ENCODE measurements at regions of chr3 and their contacts with region 1.

Region 1: DNA sequence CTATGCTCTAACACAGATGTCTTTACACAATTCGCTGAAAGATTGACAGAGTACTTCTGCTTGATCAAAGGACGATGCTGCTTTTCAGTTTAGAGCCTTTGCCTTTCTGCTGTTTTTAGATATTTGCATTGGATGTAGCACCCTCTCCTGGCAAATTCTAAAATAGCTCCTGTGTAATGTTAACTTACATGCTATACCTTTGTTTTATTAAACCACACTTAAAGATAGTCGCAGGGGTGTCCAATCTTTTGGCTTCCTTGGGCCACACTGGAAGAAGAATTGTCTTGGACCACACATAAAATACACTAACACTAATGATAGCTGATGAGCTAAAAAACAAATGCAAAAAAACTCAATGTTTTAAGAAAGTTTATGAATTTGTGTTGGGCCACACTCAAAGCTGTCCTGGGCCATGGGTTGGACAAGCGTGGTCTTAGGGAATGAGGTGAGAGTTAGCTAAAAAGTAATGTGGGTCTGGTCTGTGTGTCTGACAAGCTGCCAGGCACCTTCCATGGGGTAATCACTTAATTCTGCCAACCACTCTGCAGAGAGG is 62.9 kb downstream of the ATG7 start:
- DNase-seq: no peak
- ATAC-seq: peak; percentile 40 to 80 (median 68)
- H3K4me3 ChIP-seq: no peak overlapping the region
- H3K27ac ChIP-seq: no peak overlapping the region
- H3K4me1 ChIP-seq: no peaks in the 10 kb centered on the region
- H3K27me3 ChIP-seq: no peaks in the 10 kb centered on the region
- CTCF ChIP-seq: peak; percentile 60

Region 2: GRCh38 chr3:10758304-10759061 is 576.6 kb before region 1 on chr3:
- intact Hi-C with region 1: loop called in 1 of 2 experiments (anchors 10 kb)
- DNase-seq: peak; percentile 31 to 63
- ATAC-seq: peak; percentile 77 to 89 (median 84)
- H3K4me3 ChIP-seq: no peak overlapping the region
- H3K27ac ChIP-seq: no peak overlapping the region
- H3K4me1 ChIP-seq: no peaks in the 10 kb centered on the region
- H3K27me3 ChIP-seq: peaks cover 0 to 24% (median 7%) of the 10 kb centered on the region in 3 donors
- CTCF ChIP-seq: peak; percentile 61

Region 3: GRCh38 chr3:10945683-10946287 is 389.3 kb before region 1 on chr3:
- intact Hi-C with region 1: loop called in 1 of 2 experiments (anchors 10 kb)
- DNase-seq: peak; percentile 68 to 80
- ATAC-seq: peak; percentile 61 to 89 (median 88)
- H3K4me3 ChIP-seq: no peak overlapping the region
- H3K27ac ChIP-seq: no peak overlapping the region
- H3K4me1 ChIP-seq: no peaks in the 10 kb centered on the region
- H3K27me3 ChIP-seq: peaks cover 0 to 4% (median 0%) of the 10 kb centered on the region in 3 donors
- CTCF ChIP-seq: peak; percentile 81

Region 4: DNA sequence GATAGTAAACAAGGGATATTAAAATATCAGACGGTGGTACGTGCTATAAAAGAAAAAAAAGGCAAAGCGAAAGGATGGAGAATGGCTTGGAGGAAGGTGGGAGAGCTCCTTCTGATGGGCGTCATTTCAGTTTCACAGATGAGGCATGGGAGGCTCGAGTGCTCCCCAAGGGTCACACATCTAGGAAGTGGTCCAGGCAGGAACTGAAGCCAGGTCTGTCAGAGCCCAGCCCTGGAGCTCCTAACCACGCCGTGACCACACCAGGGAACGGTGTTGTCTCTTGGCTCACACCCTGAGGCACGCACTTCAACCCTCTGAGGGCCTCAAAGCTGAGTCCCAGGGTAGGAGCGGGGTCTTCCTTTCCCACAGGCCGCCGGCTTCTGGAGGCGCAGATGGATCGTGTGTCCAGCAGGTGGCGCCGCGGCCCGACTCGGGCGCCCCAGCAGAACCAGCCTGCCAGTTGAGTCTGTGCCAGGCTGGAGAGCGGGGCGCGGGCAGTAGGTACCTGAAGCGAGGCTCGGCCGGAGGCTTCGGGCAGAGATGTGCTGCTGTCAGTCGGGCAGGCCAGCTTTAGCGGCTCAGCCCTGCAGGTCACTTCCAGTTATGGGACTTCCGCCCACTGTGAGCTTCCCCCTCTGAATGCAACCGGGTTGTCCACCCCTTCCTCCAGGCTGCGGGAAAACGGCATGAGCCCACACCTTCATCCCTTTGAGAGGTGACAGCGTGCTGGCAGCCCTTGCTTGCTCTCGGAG is 274.5 kb before region 1 on chr3:
- intact Hi-C with region 1: loop called (anchors 5 kb)
- DNase-seq: peak; percentile 73 to 74
- ATAC-seq: peak; percentile 42 to 82 (median 74)
- H3K4me3 ChIP-seq: peak overlapping the region; percentile 5
- H3K27ac ChIP-seq: no peak overlapping the region
- H3K4me1 ChIP-seq: no peaks in the 10 kb centered on the region
- H3K27me3 ChIP-seq: peaks cover 0 to 40% (median 2%) of the 10 kb centered on the region in 3 donors
- CTCF ChIP-seq: peak; percentile 75

Region 5: GRCh38 chr3:11155341-11156025 is 179.6 kb before region 1 on chr3:
- intact Hi-C with region 1: loop called in 1 of 2 experiments (anchors 2 kb)
- DNase-seq: peak; percentile 73 to 79
- ATAC-seq: peak; percentile 82 to 91 (median 90)
- H3K4me3 ChIP-seq: peak overlapping the region; percentile 67
- H3K27ac ChIP-seq: no peak overlapping the region
- H3K4me1 ChIP-seq: no peaks in the 10 kb centered on the region
- H3K27me3 ChIP-seq: peaks cover 0 to 56% (median 8%) of the 10 kb centered on the region in 3 donors
- CTCF ChIP-seq: peak; percentile 58

Region 6: DNA sequence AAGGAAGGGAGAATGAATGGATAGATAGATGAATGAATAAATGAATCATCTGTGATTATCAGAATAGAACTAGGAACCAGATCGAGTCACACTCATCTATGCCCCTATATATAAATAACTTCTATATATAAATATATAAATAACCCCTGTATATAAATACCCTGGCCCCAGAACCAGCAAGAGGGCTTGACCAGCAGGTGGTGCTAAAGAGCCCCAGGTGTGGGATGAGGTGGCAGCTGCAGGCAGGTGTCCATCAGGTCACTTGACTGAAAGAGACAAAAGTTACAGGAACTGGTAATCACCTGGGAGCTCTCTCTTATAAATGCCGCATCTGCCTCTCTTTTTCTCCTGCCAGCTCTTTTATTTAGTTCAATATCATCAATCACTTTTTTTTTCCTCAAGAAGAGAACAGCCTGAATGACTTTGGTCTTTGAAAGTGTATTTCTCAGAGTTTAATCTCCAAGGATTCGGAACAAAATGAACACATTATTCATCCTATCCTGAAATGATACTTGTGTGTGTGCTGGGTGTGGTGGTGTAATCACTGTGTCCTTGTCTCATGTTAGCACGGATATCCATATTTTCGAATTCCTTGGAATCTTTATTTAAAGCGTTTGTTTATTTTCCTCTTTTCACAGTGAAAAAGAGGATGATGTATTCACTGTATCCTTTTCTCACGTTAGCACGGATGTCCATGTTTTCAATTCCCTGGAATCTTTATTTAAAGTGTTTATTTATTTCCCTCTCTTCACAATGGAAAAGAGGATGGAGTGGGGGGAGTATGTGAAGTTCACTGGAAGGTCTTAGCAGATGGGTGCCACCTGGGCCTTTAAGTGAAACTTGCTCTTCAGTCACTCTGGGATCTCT is 98.3 kb before region 1 on chr3:
- intact Hi-C with region 1: loop called (anchors 1 to 5 kb)
- DNase-seq: peak; percentile 46 to 63
- ATAC-seq: peak; percentile 42 to 65 (median 59)
- H3K4me3 ChIP-seq: no peak overlapping the region
- H3K27ac ChIP-seq: no peak overlapping the region
- H3K4me1 ChIP-seq: no peaks in the 10 kb centered on the region
- H3K27me3 ChIP-seq: no peaks in the 10 kb centered on the region
- CTCF ChIP-seq: peak; percentile 71

Region 7: GRCh38 chr3:11300970-11301369 is 34.2 kb before region 1 on chr3:
- intact Hi-C with region 1: no loop called
- DNase-seq: no peak
- ATAC-seq: no peak
- H3K4me3 ChIP-seq: no peak overlapping the region
- H3K27ac ChIP-seq: no peak overlapping the region
- H3K4me1 ChIP-seq: peaks cover 7% of the 10 kb centered on the region
- H3K27me3 ChIP-seq: no peaks in the 10 kb centered on the region
- CTCF ChIP-seq: no peak